Activated CD8-positive, alpha-beta T cell treated with anti-CD3 and anti-CD28 coated beads, Interleukin-2, amount 10 ng/mL, durations not matched to agents 7 days and 5 days (primary cell): ENCODE measurements at regions of chr9 and their contacts with region 1.

Region 1: DNA sequence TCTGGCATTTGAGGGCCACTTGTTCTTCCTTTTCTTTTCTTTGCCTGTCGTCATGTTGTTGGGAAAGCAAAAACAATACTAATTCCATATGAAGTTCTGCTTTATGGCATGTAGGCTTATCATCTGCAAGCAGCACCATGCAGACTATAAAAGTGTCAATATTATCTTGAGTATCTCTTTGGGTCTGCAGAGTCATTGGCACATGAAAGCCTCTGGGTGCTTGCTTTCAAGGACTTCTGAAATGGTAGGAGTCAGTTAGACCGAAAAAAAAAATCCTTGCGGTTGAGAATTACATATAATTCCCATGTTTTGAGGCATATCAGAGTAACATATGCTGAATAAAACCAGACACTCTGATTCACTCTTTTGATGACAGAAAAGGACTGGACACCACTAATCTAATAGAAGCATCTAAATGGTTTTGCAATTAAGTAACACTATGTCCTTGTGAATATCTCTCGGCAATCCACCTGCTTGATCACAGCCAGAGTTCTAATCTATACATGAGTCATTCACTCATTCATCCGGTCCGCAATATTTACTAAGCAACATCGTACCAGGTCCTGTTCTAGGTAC is 44.4 kb downstream of the GNAQ start:
- DNase-seq: no peak
- ATAC-seq: no peak
- H3K4me3 Mint-ChIP-seq: no peak overlapping the region
- H3K27ac Mint-ChIP-seq: no peak overlapping the region
- H3K4me1 Mint-ChIP-seq: peaks cover 27% of the 10 kb centered on the region
- H3K27me3 Mint-ChIP-seq: no peaks in the 10 kb centered on the region

Region 2: DNA sequence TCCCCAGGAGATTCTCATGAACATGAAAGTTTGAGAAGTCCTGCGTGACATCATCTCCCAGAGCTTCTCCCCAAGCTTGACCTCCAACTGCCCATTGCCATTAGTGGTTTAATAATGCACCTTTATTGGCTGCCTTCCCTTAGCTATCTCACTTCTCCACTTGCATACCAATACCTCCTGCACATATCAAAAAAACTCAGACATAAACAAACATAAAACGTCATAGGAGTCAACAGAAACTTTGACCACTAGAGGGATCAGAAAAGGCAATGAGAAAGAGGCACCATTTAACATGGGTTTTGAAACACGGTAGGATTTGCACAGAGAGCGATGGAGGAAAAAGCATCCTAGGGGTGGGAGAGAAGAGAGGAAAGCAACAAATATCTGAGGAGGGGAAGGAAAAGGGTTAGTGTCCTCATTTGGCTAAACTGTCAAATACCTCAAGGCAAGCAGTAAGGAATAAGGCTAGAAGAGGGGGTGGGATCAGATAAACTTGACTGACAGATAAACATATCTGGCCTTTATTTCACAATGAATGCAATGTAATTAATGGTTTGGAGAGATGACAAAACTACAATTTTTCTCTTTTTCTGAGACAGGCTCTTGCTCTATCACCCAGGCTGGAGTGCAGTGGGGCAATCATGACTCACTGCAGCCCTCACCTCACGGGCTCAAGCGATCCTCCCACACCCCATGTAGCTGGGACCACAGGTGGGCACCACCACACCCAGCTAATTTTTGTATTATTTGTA is 17.5 kb after region 1 on chr9:
- CTCF ChIA-PET with region 1: interaction called, 12 read pairs
- POLR2A ChIA-PET with region 1: interaction called, 3 read pairs
- DNase-seq: no peak
- ATAC-seq: no peak
- H3K4me3 Mint-ChIP-seq: no peak overlapping the region
- H3K27ac Mint-ChIP-seq: no peak overlapping the region
- H3K4me1 Mint-ChIP-seq: peaks cover 43% of the 10 kb centered on the region
- H3K27me3 Mint-ChIP-seq: no peaks in the 10 kb centered on the region